Left lung (tissue), 14 donors: ENCODE measurements at regions of chr19 and their contacts with region 1.

Region 1: DNA sequence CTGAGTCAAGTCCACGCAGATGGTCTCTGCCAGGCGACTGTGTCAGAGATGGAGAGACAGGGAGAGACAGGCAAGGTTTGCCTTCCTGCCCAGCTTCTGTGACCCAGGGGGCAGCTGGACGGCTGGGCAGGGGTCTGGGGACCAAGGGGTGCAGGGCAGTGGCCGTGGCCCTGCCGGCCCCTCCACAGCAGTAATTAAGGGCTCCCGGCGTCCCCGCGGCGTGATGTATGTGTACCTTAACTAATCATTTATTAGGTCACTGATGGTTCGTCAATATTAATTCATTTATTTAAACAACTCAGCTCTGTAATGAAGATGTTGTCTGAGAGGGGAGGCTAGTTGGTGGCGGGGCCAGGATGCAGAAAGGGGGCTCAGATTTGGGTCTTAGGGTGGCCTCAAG is 28.6 kb upstream of the TCF3 start:
- DNase-seq: no peak
- ATAC-seq: no peak
- H3K4me3 ChIP-seq: no peak overlapping the region
- H3K27ac ChIP-seq: no peak overlapping the region
- H3K4me1 ChIP-seq: peaks cover 0 to 1% of the 10 kb centered on the region in 2 donors
- H3K27me3 ChIP-seq: peaks cover 14 to 100% of the 10 kb centered on the region in 2 donors
- CTCF ChIP-seq: no peak

Region 2: GRCh38 chr19:1767464-1767933 is 86.5 kb after region 1 on chr19:
- intact Hi-C with region 1: loop called in 1 of 2 experiments (anchors 10 kb)
- DNase-seq: peak in 3 of 4 donors; percentile 20 to 87 (median 47)
- ATAC-seq: peak; percentile 86
- H3K4me3 ChIP-seq: no peak overlapping the region
- H3K27ac ChIP-seq: no peak overlapping the region
- H3K4me1 ChIP-seq: no peaks in the 10 kb centered on the region
- H3K27me3 ChIP-seq: peaks cover 69 to 100% of the 10 kb centered on the region in 2 donors
- CTCF ChIP-seq: peak; percentile 91 to 94